OCI-LY7 (cell line): ENCODE measurements at regions of chr2 and their contacts with region 1.

Region 1: DNA sequence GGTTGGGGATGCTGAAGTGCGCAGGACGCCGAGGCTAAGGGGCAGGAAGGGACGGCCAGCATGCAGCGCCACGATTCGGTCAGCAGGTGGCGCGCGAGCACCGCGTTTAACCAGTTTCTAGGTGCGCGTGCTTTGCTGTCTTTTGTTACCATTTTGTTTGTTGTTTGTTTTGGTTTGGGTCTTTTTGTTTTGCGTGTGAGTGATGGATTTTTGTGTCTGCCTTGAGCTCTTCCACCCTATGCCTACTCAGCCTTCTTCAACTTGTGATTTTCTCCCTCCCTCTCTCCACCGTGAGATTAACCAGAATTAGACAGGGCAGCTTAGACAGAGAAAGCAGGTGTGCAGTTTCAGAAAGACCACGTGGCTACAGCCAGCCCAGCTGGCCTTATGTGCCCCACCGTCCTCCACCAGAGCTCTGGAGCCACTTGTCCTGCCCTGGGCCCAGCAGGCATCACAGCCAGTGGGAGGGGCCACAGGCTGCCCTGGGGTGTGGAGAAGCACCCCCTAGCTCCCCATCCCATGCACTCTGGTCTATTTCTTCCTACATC is 180.2 kb downstream of the RNF144A start:
- DNase-seq: peak; percentile 70
- H3K4me3 ChIP-seq: peak overlapping the region; percentile 49
- H3K27ac ChIP-seq: no peak overlapping the region
- H3K4me1 ChIP-seq: peaks cover 8% of the 10 kb centered on the region
- CTCF ChIP-seq: peak; percentile 99

Region 2: DNA sequence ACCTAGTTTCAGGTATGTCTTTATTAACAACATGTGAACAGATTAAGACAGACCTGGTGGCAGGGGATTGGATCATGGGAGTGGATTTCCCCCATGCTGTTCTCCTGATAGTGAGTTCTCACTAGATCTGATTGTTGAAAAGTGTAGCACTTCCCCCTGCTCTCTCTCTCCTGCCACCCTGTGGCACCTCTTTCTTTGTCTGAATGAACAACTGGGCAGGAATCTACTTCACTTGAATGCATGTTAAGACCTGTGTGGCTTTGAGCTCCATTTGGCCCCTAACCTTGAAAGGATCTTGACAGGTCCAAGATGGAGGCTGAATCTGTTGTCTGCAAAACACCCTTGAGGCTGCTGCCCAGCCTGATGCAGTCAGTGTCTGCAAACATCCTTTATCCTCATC is 14.2 kb after region 1 on chr2:
- CTCF ChIA-PET with region 1: no interaction called
- POLR2A ChIA-PET with region 1: interaction called, 12 read pairs
- intact Hi-C with region 1: no loop called
- DNase-seq: peak; percentile 18
- H3K4me3 ChIP-seq: no peak overlapping the region
- H3K27ac ChIP-seq: no peak overlapping the region
- H3K4me1 ChIP-seq: no peaks in the 10 kb centered on the region
- CTCF ChIP-seq: peak; percentile 54

Region 3: DNA sequence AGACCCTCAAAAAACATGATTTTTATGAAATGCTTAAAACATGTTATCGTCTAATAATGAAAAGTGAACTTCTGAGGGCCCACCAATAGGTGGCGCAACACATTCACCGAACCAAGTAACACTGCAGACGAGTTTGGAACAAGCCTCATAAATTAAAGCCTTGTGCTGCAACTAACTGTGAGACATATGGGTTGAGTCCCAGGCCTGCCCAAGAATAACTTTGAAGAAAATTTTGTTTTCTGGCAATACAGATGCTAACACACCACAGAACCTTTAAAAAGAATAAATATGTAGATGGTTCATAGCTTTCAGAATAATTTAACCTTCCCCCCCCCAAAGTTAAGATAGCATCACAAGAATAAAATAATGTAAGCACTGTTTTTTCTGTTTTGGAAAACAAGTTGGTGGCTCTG is 105.6 kb after region 1 on chr2:
- CTCF ChIA-PET with region 1: no interaction called
- POLR2A ChIA-PET with region 1: no interaction called
- intact Hi-C with region 1: loop called (anchors 5 kb)
- DNase-seq: peak; percentile 67
- H3K4me3 ChIP-seq: no peak overlapping the region
- H3K27ac ChIP-seq: no peak overlapping the region
- H3K4me1 ChIP-seq: no peaks in the 10 kb centered on the region
- CTCF ChIP-seq: peak; percentile 99

Region 4: DNA sequence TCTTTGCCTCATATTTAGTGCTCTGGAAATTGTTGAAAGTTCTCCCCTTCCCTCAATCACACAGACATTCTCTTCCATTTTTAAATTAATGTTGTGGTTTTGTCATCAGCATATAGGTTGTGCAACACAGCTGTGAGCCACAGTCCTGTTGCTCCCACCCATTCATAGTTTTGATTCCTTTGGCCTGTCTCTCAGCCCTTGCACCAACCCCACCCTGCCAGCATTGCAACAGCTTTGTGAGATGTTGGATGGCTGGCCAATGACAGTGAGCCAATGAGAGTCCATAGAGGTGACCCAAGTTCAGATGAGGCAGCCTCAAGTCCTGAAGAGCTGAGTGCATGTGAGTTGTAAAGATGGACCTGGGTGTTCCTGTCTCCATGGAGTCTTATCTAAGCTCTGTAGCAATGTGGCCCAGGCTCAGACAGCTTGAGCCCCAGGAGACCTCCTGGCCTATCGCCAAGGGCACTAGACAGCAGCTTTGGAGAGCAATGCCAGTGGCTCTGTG is 595.3 kb after region 1 on chr2:
- CTCF ChIA-PET with region 1: no interaction called
- POLR2A ChIA-PET with region 1: no interaction called
- intact Hi-C with region 1: no loop called
- DNase-seq: no peak
- H3K4me3 ChIP-seq: no peak overlapping the region
- H3K27ac ChIP-seq: no peak overlapping the region
- H3K4me1 ChIP-seq: peaks cover 12% of the 10 kb centered on the region
- CTCF ChIP-seq: no peak

Region 5: GRCh38 chr2:8432706-8433336 is 1335.4 kb after region 1 on chr2:
- CTCF ChIA-PET with region 1: no interaction called
- POLR2A ChIA-PET with region 1: no interaction called
- intact Hi-C with region 1: no loop called
- DNase-seq: peak; percentile 38
- H3K4me3 ChIP-seq: peak overlapping the region; percentile 36
- H3K27ac ChIP-seq: peak overlapping the region; percentile 28
- H3K4me1 ChIP-seq: peaks cover 55% of the 10 kb centered on the region
- CTCF ChIP-seq: no peak